PC-3 (cell line): ENCODE measurements at regions of chr1 and their contacts with region 1.

Region 1: DNA sequence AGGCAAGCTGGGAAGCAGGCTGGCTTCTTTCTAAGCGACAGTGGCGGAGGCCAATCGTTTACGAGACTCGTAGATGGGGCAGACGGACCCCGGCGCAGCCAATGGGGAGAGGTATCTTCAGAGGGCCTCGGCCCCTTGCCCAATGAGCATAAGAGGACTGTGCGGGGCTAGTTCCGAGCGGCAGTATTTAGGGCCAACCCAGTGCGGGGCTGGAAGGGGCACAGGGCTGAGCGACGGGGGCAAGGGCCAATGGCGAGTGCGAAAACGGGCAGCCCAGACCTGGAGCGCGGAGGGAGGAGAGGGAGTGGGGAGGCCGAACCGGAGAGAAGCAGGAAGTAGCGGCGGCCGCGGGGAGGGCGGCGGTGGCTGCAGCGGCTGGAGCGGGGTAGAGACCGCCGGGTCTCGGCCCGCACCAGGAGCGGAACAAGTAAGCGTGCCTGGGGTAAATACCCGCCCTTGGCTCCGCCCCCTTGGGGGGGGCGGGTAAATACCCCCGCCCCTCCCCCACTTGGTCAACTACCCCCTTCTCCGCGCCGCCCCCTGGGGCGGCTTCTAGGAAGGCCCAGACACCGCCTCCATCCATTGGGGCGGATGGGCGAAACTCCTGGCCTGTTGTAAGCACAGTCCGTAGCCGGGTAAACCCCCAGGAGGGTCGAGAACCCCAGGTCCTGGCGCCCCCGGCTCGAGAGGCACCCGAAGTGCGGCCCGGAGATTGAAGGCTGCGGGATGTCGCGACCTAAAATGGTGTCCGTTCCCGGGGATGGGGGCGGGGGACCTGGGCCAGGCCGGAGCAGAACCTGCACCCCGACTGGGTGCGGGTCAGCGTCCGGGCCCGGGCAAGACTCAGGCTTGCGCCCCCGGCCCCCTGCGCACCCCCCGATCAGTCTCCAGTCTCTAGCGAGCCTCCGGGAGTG is at the start of gene ZNF687:
- DNase-seq: peak; percentile 100
- ATAC-seq: peak; percentile 90
- H3K4me3 ChIP-seq: peak within 1 kb of the TSS; percentile 72
- H3K27ac ChIP-seq: peak within 1 kb of the TSS; percentile 88
- H3K4me1 ChIP-seq: peaks cover 16% of the 10 kb centered on the region
- H3K27me3 ChIP-seq: no peaks in the 10 kb centered on the region
- CTCF ChIP-seq: no peak
- total RNA-seq, gene ZNF687: 24.6 and 30.3 TPM in 2 replicates

Region 2: GRCh38 chr1:151198255-151199127 is 83.7 kb before region 1 on chr1 and contains the start of gene PIP5K1A:
- CTCF ChIA-PET with region 1: no interaction called
- POLR2A ChIA-PET with region 1: interaction called, 7 read pairs
- intact Hi-C with region 1: loop called (anchors 1 kb)
- DNase-seq: peak; percentile 99
- ATAC-seq: peak; percentile 64
- H3K4me3 ChIP-seq: peak within 1 kb of the TSS; percentile 96
- H3K27ac ChIP-seq: peak within 1 kb of the TSS; percentile 83
- H3K4me1 ChIP-seq: peaks cover 37% of the 10 kb centered on the region
- H3K27me3 ChIP-seq: no peaks in the 10 kb centered on the region
- CTCF ChIP-seq: no peak
- total RNA-seq, gene PIP5K1A: 63.3 and 78.3 TPM in 2 replicates

Region 3: DNA sequence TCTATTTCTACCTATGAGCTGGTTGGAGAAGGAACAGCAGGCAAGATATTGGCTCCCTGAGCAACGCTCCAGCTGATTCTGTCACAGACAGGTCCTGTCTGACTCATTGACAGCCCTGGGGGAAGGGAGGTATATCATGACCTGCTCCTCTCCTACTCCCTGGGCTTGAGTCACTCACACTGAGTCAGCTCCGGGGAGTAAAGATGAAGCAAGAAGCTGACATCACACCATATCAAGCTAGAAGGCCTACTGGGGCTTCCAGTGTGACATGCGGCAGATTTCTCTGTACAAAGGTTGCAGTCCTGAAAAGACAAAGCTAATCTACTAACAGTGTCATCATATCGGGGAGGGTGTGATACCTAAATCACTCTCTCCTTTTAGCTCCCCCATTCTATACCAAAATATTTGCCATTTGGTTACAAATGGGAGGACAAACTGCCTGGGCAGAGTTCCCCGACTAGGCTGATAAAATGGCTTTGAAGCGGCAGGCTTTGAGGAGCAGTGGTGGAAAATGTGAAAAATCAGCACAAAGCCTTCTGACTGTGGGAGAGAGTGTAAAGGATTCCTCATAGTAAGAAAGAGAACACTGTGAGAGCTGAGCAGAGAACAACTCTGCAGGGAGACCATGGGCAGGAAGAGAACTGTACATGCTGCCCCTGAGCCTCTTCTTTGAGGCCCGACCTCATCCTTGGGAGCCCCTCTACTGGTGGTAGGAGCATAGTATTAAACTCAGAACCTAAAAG is 29.5 kb after region 1 on chr1:
- CTCF ChIA-PET with region 1: interaction called, 4 read pairs
- POLR2A ChIA-PET with region 1: no interaction called
- intact Hi-C with region 1: loop called (anchors 1 kb)
- DNase-seq: peak; percentile 100
- ATAC-seq: peak; percentile 94
- H3K4me3 ChIP-seq: peak overlapping the region; percentile 39
- H3K27ac ChIP-seq: peak overlapping the region; percentile 91
- H3K4me1 ChIP-seq: peaks cover 51% of the 10 kb centered on the region
- H3K27me3 ChIP-seq: no peaks in the 10 kb centered on the region
- CTCF ChIP-seq: no peak

Region 4: GRCh38 chr1:151327223-151327902 is 45.1 kb after region 1 on chr1 and contains the start of gene PI4KB:
- CTCF ChIA-PET with region 1: interaction called, 3 read pairs
- POLR2A ChIA-PET with region 1: interaction called, 7 read pairs
- intact Hi-C with region 1: loop called (anchors 1 kb)
- DNase-seq: peak; percentile 100
- ATAC-seq: peak; percentile 83
- H3K4me3 ChIP-seq: peak within 1 kb of the TSS; percentile 72
- H3K27ac ChIP-seq: peak within 1 kb of the TSS; percentile 85
- H3K4me1 ChIP-seq: peaks cover 37% of the 10 kb centered on the region
- H3K27me3 ChIP-seq: no peaks in the 10 kb centered on the region
- CTCF ChIP-seq: no peak
- total RNA-seq, gene PI4KB: 75.6 and 99.5 TPM in 2 replicates

Region 5: GRCh38 chr1:151340870-151341754 is 58.9 kb after region 1 on chr1:
- CTCF ChIA-PET with region 1: interaction called, 10 read pairs
- POLR2A ChIA-PET with region 1: no interaction called
- intact Hi-C with region 1: loop called (anchors 5 kb)
- DNase-seq: peak; percentile 93
- ATAC-seq: peak; percentile 93
- H3K4me3 ChIP-seq: no peak overlapping the region
- H3K27ac ChIP-seq: no peak overlapping the region
- H3K4me1 ChIP-seq: peaks cover 6% of the 10 kb centered on the region
- H3K27me3 ChIP-seq: no peaks in the 10 kb centered on the region
- CTCF ChIP-seq: peak; percentile 95

Region 6: DNA sequence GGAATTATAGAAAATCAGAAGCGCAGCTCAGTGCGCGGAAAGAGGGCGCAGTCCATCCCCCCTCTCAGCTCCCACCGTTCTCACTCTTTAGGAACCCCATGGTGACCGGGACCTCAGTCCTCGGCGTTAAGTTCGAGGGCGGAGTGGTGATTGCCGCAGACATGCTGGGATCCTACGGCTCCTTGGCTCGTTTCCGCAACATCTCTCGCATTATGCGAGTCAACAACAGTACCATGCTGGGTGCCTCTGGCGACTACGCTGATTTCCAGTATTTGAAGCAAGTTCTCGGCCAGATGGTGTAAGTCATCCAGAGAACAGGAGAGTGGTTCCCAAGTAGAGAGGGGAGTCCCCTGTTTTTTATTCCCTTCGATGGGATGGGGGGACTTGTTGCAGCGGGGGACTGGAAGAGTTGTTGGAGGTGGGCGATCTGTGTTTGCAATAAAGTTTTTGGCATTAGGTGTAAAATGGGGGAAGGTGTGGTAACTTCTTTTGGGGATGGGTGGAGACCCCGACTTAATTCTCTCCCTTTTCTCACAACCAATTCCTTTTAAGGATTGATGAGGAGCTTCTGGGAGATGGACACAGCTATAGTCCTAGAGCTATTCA is 117.8 kb after region 1 on chr1:
- CTCF ChIA-PET with region 1: interaction called, 5 read pairs
- POLR2A ChIA-PET with region 1: no interaction called
- intact Hi-C with region 1: loop called (anchors 1 kb)
- DNase-seq: no peak
- ATAC-seq: peak; percentile 34
- H3K4me3 ChIP-seq: peak overlapping the region; percentile 91
- H3K27ac ChIP-seq: peak overlapping the region; percentile 70
- H3K4me1 ChIP-seq: peaks cover 13% of the 10 kb centered on the region
- H3K27me3 ChIP-seq: no peaks in the 10 kb centered on the region
- CTCF ChIP-seq: no peak

Region 7: GRCh38 chr1:151459331-151460046 is 177.3 kb after region 1 on chr1 and contains the start of gene POGZ:
- CTCF ChIA-PET with region 1: no interaction called
- POLR2A ChIA-PET with region 1: interaction called, 10 read pairs
- intact Hi-C with region 1: no loop called
- DNase-seq: peak; percentile 97
- ATAC-seq: peak; percentile 81
- H3K4me3 ChIP-seq: peak within 1 kb of the TSS; percentile 100
- H3K27ac ChIP-seq: peak within 1 kb of the TSS; percentile 79
- H3K4me1 ChIP-seq: peaks cover 12% of the 10 kb centered on the region
- H3K27me3 ChIP-seq: no peaks in the 10 kb centered on the region
- CTCF ChIP-seq: no peak
- total RNA-seq, gene POGZ: 30.5 and 77.9 TPM in 2 replicates